HepG2 (cell line): ENCODE measurements at regions of chr17 and their contacts with region 1.

Region 1: DNA sequence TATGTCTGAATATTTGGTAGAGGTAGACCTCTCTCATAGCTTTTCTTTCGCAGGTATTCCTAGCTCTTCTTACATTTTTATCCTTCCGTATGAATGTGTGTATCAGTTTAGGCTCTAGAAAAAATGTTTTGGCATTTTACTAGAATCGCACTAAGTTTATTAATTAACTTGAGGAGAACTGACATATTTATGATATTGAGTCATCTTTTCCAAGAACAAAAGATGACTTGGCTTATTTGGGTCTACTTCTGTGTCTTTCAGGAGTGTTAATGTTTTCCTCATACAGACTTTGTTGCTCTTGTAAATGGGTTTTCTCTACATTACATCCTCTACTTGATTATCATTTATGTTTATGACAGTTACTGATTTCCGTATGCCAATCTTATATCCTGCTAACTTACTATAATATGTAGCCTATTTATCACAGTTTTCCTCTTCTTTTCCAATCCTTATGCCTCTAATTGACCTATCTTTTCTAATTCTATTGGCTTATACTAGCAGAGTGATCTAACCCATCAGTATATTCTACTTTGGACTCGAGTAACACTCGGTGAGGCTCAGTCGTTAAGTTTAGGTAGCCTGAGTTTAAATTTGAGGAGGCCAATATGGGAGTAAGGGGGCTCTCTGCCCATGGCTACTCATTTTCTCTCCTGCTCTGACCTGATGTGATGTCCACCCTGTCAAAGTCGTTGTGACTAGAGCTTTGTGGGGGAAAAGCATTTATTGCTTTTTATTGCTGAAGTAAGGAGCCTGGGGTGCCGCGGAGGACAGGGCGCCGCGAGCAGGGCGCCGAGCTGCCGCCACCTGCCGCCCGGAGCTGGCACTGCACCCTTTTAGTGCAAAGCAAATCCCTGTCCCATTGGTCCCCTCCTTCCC is 20.0 kb downstream of the ST6GALNAC1 start:
- DNase-seq: peak; percentile 41
- ATAC-seq: peak; percentile 84
- H3K4me3 ChIP-seq: peak overlapping the region in 2 of 3 experiments; percentile 44; a peak in 4 of 6 replicates
- H3K27ac ChIP-seq: no peak overlapping the region
- H3K4me1 ChIP-seq: peaks cover 13% of the 10 kb centered on the region
- H3K27me3 ChIP-seq: peaks cover 0 to 2% of the 10 kb centered on the region in 2 experiments; a peak in 1 of 5 replicates
- CTCF ChIP-seq: peak; percentile 93
- EP300 ChIP-seq: no peak
- POLR2A ChIP-seq: no peak
- RAD21 ChIP-seq: peak; percentile 95

Region 2: DNA sequence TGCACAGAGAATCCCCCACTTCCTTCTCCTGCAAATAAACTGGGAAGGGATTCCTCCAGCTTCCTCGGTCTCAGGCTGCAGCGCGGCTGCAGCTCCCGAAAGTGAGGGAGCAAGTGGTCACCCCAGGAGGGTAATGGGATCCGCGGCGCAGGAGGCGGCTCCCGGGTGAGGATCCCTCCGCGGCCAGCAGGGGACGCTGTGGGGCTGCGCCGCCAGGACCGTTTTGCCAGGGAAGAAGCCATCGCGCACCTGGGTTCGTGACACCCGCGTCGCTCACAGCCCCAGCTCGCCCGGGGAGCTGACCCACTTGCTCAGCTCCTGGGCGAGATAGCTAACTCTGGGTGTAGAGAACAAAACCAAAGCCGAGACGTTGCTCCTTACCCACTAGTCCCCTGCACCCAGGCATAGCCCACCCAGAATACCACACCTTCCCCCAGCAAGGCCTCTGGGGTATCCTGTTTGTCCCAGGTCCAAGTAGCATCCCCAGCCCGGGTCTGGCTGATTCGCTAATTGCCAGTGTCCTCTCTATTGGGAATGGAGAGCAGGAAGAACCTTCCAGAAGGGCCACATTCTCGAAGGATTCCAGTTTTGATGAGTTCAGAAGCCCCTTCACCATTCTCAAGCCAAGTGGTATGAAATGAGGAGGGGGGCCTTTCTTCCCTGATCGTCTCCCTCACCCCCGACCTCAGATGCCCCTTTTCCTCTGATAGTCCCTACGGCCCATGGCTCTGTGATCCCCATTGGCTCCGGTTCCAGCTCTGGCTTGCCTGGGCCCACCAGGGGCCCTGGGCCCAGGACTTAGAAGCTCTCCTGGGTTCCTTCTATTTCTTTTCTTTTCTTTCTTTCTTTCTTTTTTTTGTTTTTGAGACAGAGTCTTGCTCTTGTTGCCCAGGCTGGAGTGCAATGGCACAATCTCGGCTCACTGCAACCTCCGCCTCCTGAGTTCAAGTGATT is 100.1 kb before region 1 on chr17:
- CTCF ChIA-PET with region 1: interaction called, 21 read pairs
- POLR2A ChIA-PET with region 1: interaction called, 3 read pairs
- in situ Hi-C with region 1: loop called (anchors 5 kb)
- intact Hi-C with region 1: loop called (anchors 2 kb)
- DNase-seq: peak; percentile 53
- ATAC-seq: peak; percentile 58
- H3K4me3 ChIP-seq: peak overlapping the region in 1 of 3 experiments; percentile 64; a peak in 2 of 6 replicates
- H3K27ac ChIP-seq: no peak overlapping the region
- H3K4me1 ChIP-seq: peaks cover 85% of the 10 kb centered on the region
- H3K27me3 ChIP-seq: peaks cover 8 to 32% of the 10 kb centered on the region in 2 experiments
- CTCF ChIP-seq: peak; percentile 100
- EP300 ChIP-seq: no peak; a peak in 1 of 4 replicates
- POLR2A ChIP-seq: no peak
- RAD21 ChIP-seq: peak; percentile 100

Region 3: DNA sequence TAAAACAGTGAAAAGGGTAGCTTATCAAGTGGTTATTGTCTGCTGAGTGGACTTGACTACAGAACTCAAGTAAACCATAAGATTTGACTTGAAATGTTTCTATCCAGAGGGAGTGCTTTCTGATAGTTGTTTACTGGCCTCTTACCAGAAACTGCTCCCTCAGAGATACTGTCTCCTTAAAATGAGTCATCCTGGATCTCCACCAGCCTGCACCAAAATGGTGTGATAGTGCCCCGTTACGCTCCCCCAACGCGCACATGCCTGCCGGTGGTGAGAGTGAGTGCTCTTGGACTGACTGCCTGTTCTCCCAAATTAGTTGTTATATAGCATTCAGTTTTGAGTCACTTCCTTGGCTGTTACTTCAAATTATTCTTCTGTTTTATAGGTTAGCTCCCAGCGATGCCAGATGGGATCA is 60.8 kb before region 1 on chr17:
- CTCF ChIA-PET with region 1: interaction called, 19 read pairs
- POLR2A ChIA-PET with region 1: interaction called, 22 read pairs
- in situ Hi-C with region 1: loop called (anchors 10 kb)
- intact Hi-C with region 1: no loop called
- DNase-seq: no peak
- ATAC-seq: no peak
- H3K4me3 ChIP-seq: no peak overlapping the region
- H3K27ac ChIP-seq: no peak overlapping the region
- H3K4me1 ChIP-seq: peaks cover 62% of the 10 kb centered on the region
- H3K27me3 ChIP-seq: no peaks in the 10 kb centered on the region; a peak in 1 of 5 replicates
- CTCF ChIP-seq: no peak
- EP300 ChIP-seq: no peak
- POLR2A ChIP-seq: no peak
- RAD21 ChIP-seq: no peak

Region 4: GRCh38 chr17:76612977-76613851 is 10.3 kb before region 1 on chr17:
- CTCF ChIA-PET with region 1: no interaction called
- POLR2A ChIA-PET with region 1: interaction called, 14 read pairs
- in situ Hi-C with region 1: no loop called
- intact Hi-C with region 1: no loop called
- DNase-seq: peak; percentile 94
- ATAC-seq: peak; percentile 95
- H3K4me3 ChIP-seq: peak overlapping the region; percentile 17 to 70 (median 32)
- H3K27ac ChIP-seq: peak overlapping the region; percentile 57
- H3K4me1 ChIP-seq: peaks cover 34% of the 10 kb centered on the region
- H3K27me3 ChIP-seq: peaks cover 0 to 6% of the 10 kb centered on the region in 2 experiments; a peak in 1 of 5 replicates
- CTCF ChIP-seq: peak; percentile 71
- EP300 ChIP-seq: no peak
- POLR2A ChIP-seq: no peak
- RAD21 ChIP-seq: peak; percentile 57